Panc1 (cell line): ENCODE measurements at regions of chr1 and their contacts with region 1.

Region 1: GRCh38 chr1:201719812-201720521 is 109.0 kb upstream of the IPO9 start:
- DNase-seq: no peak
- ATAC-seq: peak; percentile 33
- H3K4me3 ChIP-seq: no peak overlapping the region
- H3K27ac ChIP-seq: peak overlapping the region; percentile 81
- H3K4me1 ChIP-seq: peaks cover 48% of the 10 kb centered on the region
- H3K27me3 ChIP-seq: no peaks in the 10 kb centered on the region
- CTCF ChIP-seq: no peak

Region 2: GRCh38 chr1:201376464-201377374 is 343.2 kb before region 1 on chr1:
- CTCF ChIA-PET with region 1: no interaction called
- POLR2A ChIA-PET with region 1: no interaction called
- in situ Hi-C with region 1: no loop called
- intact Hi-C with region 1: no loop called
- DNase-seq: no peak
- ATAC-seq: no peak
- H3K4me3 ChIP-seq: no peak overlapping the region
- H3K27ac ChIP-seq: no peak overlapping the region
- H3K4me1 ChIP-seq: no peaks in the 10 kb centered on the region
- H3K27me3 ChIP-seq: peaks cover 10% of the 10 kb centered on the region; the same call in 1 of the 2 replicates
- CTCF ChIP-seq: peak; percentile 67

Region 3: GRCh38 chr1:201877877-201878401 is 158.0 kb after region 1 on chr1:
- CTCF ChIA-PET with region 1: no interaction called
- POLR2A ChIA-PET with region 1: no interaction called
- in situ Hi-C with region 1: no loop called
- intact Hi-C with region 1: no loop called
- DNase-seq: no peak
- ATAC-seq: peak; percentile 55; the same call in 1 of the 2 replicates
- H3K4me3 ChIP-seq: no peak overlapping the region
- H3K27ac ChIP-seq: no peak overlapping the region
- H3K4me1 ChIP-seq: no peaks in the 10 kb centered on the region
- H3K27me3 ChIP-seq: no peaks in the 10 kb centered on the region
- CTCF ChIP-seq: peak; percentile 84

Region 4: DNA sequence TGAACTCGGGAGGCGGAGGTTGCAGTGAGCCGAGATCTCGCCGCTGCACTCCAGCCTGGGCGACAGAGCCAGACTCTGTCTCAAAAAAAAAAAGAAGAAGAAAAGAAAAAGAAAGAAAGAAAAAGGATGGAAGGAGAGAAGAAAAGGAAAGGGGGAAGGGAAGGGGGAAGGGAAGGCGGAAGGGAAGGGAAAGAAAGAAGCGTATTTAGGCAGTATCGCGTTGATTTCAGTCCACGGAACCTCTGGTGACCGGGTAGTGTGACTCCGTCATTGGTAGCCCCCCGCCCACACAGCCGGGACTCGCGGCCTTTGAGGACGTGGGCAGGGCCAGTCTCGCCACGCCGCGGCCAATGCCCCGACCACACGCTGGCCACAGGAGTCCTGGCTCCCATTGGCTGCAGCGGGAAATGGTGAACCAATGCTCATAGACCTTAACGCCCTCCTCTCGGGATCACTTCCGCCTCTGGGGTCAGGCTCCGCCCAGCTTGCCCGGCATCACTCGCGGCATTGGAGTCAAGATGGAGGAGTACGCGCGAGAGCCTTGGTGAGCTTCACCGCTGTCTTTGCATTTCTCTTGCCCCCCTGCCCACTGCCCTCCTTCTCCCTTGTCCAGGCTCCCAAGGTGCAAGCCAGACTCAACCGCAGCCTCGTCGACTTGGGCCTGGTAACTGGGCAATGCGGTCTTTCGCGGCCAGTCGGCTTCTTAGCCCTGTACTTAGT is 235.2 kb after region 1 on chr1 and contains the start of gene TIMM17A:
- CTCF ChIA-PET with region 1: interaction called, 12 read pairs
- POLR2A ChIA-PET with region 1: no interaction called
- in situ Hi-C with region 1: no loop called
- intact Hi-C with region 1: no loop called
- DNase-seq: peak; percentile 92
- ATAC-seq: peak; percentile 100
- H3K4me3 ChIP-seq: peak within 1 kb of the TSS; percentile 97 to 99
- H3K27ac ChIP-seq: peak within 1 kb of the TSS; percentile 97
- H3K4me1 ChIP-seq: peaks cover 4% of the 10 kb centered on the region
- H3K27me3 ChIP-seq: no peaks in the 10 kb centered on the region
- CTCF ChIP-seq: no peak
- total RNA-seq, gene TIMM17A: 118 TPM

Region 5: GRCh38 chr1:203006948-203007871 is 1287.2 kb after region 1 on chr1 and contains the start of gene TMEM183A:
- CTCF ChIA-PET with region 1: no interaction called
- POLR2A ChIA-PET with region 1: no interaction called
- in situ Hi-C with region 1: no loop called
- intact Hi-C with region 1: no loop called
- DNase-seq: peak; percentile 88
- ATAC-seq: peak; percentile 98
- H3K4me3 ChIP-seq: peak within 1 kb of the TSS; percentile 64 to 70
- H3K27ac ChIP-seq: peak within 1 kb of the TSS; percentile 91
- H3K4me1 ChIP-seq: peaks cover 10% of the 10 kb centered on the region
- H3K27me3 ChIP-seq: no peaks in the 10 kb centered on the region
- CTCF ChIP-seq: no peak
- total RNA-seq, gene TMEM183A: 59.1 TPM